Adrenal gland (tissue), 19 donors: ENCODE measurements at regions of chr10 and their contacts with region 1.

Region 1: DNA sequence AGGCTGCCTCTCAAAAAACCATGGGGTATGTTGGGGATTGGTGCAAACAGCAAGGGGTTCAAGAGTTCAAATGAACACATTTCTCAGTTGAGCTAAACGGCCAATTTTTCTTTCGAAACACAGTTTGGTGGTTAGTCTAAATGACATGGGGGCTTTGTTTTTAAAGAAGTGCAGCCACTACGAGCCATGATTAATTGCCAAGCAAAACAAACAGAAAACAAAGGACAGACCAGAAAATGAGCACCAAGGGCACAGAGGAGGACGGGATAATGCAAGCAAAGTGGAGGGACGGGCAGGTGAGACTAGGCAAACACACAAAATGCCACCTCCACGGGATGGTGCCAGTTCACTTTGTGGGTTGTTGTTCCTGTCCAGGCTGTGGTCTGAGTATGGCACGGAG is 64.5 kb upstream of the PDLIM1 start:
- DNase-seq: no peak
- H3K4me3 ChIP-seq: no peak overlapping the region
- H3K27ac ChIP-seq: no peak overlapping the region
- H3K4me1 ChIP-seq: peaks cover 7 to 16% of the 10 kb centered on the region in 2 donors
- H3K27me3 ChIP-seq: no peaks in the 10 kb centered on the region
- CTCF ChIP-seq: no peak
- POLR2A ChIP-seq: no peak

Region 2: DNA sequence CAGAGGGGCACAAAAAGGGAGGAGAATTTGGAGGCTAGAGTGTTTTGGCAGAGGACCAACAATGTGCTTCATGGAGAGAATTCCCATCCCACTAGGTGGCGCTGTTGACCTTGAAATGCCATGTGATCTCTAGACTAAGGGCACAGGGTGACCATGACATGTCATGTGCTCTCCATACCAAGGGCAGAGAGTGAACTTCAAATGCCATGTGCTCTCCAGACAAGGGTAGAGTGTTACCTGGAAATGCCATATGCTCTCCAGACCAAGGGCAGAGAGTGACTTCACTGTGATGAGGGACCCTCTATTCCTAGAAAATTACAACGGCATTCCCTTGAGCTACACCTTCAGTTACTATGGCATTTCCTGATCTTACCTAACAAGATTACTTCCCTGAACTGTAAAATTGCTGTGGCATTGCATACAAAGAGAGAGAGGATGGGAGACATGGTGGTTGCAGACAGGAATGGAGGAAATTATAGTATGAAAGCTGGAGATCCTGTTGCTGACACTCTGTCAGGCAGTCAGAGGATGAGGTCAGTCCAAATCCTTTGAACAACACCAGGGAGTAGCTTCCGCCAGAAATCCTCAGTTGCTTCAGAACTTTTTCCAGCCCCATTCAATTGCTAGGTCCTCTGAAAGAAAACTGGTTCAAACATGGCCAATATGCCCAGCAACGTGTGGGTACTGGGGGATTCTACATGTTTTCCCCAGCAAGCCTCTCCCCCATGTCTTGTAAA is 222.1 kb before region 1 on chr10:
- intact Hi-C with region 1: loop called in 1 of 2 experiments (anchors 5 kb)
- DNase-seq: peak; percentile 64 to 91 (median 82)
- H3K4me3 ChIP-seq: no peak overlapping the region
- H3K27ac ChIP-seq: no peak overlapping the region
- H3K4me1 ChIP-seq: no peaks in the 10 kb centered on the region
- H3K27me3 ChIP-seq: no peaks in the 10 kb centered on the region
- CTCF ChIP-seq: peak; percentile 45 to 81 (median 71)
- POLR2A ChIP-seq: no peak

Region 3: DNA sequence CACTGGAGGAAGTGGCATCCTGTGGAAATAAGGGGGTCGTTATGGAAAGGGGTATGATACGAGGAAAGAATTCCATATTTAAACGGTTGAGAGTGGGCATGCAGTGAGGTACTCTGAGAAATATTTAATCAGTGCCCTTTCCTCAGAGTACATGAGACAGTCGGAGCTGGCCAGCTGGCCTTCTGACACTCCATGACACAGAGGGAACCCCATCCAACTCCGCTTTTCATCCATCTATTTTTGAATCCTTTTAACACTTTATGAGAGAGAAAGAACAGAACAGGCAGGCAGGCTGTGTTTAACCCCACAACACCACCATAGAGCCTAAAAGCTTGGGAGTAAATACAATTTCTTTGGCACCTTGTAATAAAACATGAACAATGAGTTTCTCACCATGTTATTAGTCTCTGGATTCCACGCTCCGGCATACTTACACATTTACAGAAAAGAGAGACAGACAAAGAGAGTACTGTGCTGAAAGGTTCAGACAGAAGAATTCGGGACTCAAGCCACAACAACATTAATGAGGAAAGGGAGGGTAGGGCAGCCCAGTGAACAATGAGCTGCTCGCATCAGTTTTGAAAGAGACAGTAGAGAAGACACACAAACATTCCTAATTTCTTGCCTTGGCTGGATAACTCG is 59.7 kb after region 1 on chr10:
- intact Hi-C with region 1: no loop called
- DNase-seq: no peak
- H3K4me3 ChIP-seq: no peak overlapping the region
- H3K27ac ChIP-seq: peak overlapping the region in 2 of 5 donors; percentile 2 to 58
- H3K4me1 ChIP-seq: peaks cover 2 to 3% of the 10 kb centered on the region in 2 donors
- H3K27me3 ChIP-seq: no peaks in the 10 kb centered on the region
- CTCF ChIP-seq: no peak
- POLR2A ChIP-seq: no peak

Region 4: DNA sequence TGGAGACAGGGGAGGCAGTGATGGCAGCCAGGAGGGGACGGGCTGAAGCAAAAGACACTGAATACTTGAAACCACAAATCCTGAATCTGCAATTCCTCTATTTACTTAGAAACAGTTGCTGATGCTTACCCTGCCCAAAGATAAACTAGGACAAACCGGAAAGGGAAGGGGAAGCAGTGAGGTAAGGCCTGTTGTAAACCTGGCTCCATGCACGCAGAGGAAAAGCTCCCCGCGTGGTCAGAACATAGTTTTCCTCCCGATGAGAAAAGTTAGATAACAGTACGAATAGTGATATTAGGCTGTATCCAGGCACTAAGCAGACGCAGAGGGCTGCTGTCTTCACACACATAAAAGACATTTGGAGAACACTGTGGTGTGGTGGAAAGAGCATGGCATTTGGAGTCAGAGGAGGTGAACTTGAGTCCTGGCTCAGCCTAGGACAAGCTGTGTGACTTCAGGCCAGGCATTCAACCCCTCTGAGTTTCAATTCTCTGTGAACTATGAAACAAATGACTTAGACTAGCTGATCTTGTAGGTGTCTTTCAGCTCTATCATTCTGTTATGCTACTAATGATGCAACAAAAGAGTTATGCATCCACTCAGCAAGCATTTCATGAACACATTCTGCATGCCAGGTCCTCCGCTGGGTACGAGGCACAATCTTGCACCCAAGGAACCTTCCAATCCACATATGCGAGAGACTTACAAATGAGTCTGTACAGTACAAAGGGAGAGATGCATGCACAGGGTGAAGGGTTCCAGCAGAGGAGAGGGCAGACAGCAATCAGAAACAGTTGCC is 125.0 kb after region 1 on chr10:
- intact Hi-C with region 1: no loop called
- DNase-seq: peak in 3 of 7 donors; percentile 44 to 67 (median 45)
- H3K4me3 ChIP-seq: no peak overlapping the region
- H3K27ac ChIP-seq: peak overlapping the region in 3 of 5 donors; percentile 13 to 81 (median 72)
- H3K4me1 ChIP-seq: peaks cover 0 to 3% of the 10 kb centered on the region in 2 donors
- H3K27me3 ChIP-seq: no peaks in the 10 kb centered on the region
- CTCF ChIP-seq: no peak
- POLR2A ChIP-seq: no peak

Region 5: DNA sequence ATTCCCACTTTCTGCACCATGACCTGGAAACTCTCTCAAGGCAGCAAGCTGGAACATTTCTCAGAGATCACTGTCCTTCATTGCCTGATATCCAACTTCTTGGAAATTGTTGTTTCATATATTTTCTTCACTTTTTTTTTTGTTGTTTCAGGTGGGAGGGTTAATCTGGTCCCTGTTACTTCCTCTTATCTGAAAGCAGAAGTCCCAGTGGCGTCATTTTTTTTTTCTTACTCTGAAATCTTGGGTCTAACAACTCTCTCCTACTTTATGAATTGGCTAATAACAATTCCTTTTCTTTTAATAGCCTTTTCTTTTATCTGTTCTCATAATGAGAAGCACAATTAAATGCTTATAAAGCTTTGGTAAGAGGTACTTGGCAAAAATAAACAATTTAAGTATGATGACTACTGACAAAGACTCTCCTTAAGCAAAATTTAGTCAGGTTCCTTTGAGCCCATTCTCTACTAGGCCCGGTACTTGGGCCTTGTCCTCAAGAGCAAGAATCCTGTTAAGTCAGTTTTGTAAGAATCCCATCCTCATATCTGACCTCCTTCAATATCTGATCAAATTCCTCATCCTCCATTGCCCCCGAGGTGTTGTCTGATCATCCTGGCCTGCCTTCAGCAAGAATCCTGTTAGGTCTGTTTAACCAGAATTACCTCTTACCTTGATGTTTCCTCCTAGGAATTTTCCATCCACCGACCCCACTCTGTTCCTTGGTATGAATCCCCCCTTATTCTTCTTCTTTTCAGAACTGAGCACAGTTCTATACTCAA is 541.0 kb after region 1 on chr10:
- intact Hi-C with region 1: no loop called
- DNase-seq: no peak
- H3K4me3 ChIP-seq: no peak overlapping the region
- H3K27ac ChIP-seq: no peak overlapping the region
- H3K4me1 ChIP-seq: no peaks in the 10 kb centered on the region
- H3K27me3 ChIP-seq: no peaks in the 10 kb centered on the region
- CTCF ChIP-seq: no peak
- POLR2A ChIP-seq: no peak